Natural killer cell (primary cell): ENCODE measurements at regions of chr16 and their contacts with region 1.

Region 1: GRCh38 chr16:75464130-75464918 is at the start of gene TMEM170A:
- DNase-seq: peak; percentile 98 to 99
- ATAC-seq: peak; percentile 89 to 97 (median 91)
- H3K4me3 ChIP-seq: peak within 1 kb of the TSS; percentile 82
- H3K4me3 Mint-ChIP-seq: peak within 1 kb of the TSS; percentile 97
- H3K27ac ChIP-seq: peak within 1 kb of the TSS; percentile 99
- H3K27ac Mint-ChIP-seq: peak within 1 kb of the TSS; percentile 95 to 97
- H3K4me1 ChIP-seq: peaks cover 13% of the 10 kb centered on the region
- H3K4me1 Mint-ChIP-seq: peaks cover 46 to 52% of the 10 kb centered on the region in 2 donors
- H3K27me3 ChIP-seq: no peaks in the 10 kb centered on the region
- H3K27me3 Mint-ChIP-seq: no peaks in the 10 kb centered on the region
- CTCF ChIP-seq: no peak
- total RNA-seq, gene TMEM170A: 51.5 to 61.0 (median 53.9) TPM

Region 2: DNA sequence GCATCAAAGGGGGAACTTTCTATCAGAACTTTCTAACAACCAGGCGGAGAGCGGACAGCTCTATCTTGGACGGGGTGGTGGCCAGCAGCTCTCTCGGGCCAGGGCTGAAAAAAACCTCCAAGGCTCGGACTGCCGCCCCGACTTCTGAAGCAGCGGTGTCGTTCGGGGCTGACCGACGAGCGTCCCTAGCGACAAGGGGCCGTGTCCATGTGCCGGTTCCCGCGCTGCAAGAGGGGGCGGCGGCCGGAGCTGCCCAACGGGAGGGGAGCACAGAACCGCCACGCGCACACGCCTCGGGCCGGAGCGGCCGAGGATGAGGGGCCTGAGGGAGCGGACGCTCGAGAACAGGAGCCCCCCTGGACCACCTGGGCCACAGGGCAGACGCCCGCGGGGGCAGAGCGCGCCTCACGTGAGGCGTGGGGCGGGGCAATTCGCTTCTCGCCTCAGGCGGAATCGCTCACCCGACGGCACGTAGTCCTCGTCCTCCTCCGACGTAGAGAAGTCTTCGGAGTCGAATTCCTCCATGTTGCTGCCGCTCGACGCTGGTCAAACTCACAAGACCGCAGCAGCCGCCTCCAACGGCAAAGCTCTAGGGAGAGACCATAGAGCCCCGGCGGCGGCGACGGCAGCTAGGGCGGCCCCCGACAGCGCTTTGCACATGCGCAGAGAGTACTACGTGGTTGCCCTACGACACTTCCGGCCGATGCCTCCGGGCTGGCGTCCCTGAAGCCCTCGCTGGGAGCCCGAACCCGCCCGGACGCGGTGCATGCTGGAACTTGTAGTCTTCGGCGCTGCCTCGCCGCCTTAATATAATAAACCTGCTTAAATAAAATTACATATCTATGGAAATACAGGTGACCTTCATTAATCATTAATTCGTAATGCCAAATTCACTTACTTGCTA is 31.2 kb before region 1 on chr16 and contains the start of gene CFDP1:
- intact Hi-C with region 1: loop called (anchors 1 kb)
- DNase-seq: peak; percentile 93 to 98
- ATAC-seq: peak; percentile 83 to 93 (median 87)
- H3K4me3 ChIP-seq: peak within 1 kb of the TSS; percentile 86
- H3K4me3 Mint-ChIP-seq: peak within 1 kb of the TSS; percentile 96
- H3K27ac ChIP-seq: peak within 1 kb of the TSS; percentile 94
- H3K27ac Mint-ChIP-seq: peak within 1 kb of the TSS; percentile 96 to 99
- H3K4me1 ChIP-seq: peaks cover 19% of the 10 kb centered on the region
- H3K4me1 Mint-ChIP-seq: peaks cover 22 to 26% of the 10 kb centered on the region in 2 donors
- H3K27me3 ChIP-seq: no peaks in the 10 kb centered on the region
- H3K27me3 Mint-ChIP-seq: no peaks in the 10 kb centered on the region
- CTCF ChIP-seq: no peak
- total RNA-seq, gene CFDP1: 32.2 to 38.8 (median 32.3) TPM

Region 3: DNA sequence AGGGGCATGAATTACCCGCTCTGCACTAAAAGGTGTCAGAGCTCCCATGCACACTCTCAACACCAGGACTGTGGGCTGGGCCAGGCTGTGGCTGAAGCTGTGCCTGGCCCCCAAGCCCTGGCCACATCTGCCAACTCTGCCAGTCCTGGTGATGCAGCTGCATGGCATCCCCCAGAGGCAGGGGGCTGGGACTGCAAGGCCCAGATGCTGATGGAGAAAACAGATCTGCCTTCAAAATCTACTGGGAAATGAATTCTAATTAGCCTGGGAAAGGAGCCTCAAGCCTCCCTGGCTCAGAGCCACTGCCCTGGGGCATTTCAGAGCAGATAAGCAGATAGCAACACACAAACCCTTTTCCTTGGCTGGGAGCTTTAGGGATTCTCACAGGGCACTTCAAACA is 27.6 kb after region 1 on chr16:
- intact Hi-C with region 1: no loop called
- DNase-seq: no peak
- ATAC-seq: peak in 1 of 3 donors; percentile 43
- H3K4me3 ChIP-seq: no peak overlapping the region
- H3K4me3 Mint-ChIP-seq: no peak overlapping the region
- H3K27ac ChIP-seq: no peak overlapping the region
- H3K27ac Mint-ChIP-seq: no peak overlapping the region
- H3K4me1 ChIP-seq: peaks cover 7% of the 10 kb centered on the region
- H3K4me1 Mint-ChIP-seq: peaks cover 8% of the 10 kb centered on the region in 2 donors
- H3K27me3 ChIP-seq: peaks cover 11% of the 10 kb centered on the region
- H3K27me3 Mint-ChIP-seq: peaks cover 14 to 17% of the 10 kb centered on the region in 2 donors
- CTCF ChIP-seq: no peak

Region 4: GRCh38 chr16:75566040-75566810 is 101.9 kb after region 1 on chr16 and contains the start of gene GABARAPL2:
- intact Hi-C with region 1: loop called (anchors 2 kb)
- DNase-seq: peak; percentile 94 to 95
- ATAC-seq: peak; percentile 78 to 93 (median 85)
- H3K4me3 ChIP-seq: peak within 1 kb of the TSS; percentile 59
- H3K4me3 Mint-ChIP-seq: peak within 1 kb of the TSS; percentile 90
- H3K27ac ChIP-seq: peak within 1 kb of the TSS; percentile 76
- H3K27ac Mint-ChIP-seq: peak within 1 kb of the TSS; percentile 86 to 93
- H3K4me1 ChIP-seq: peaks cover 30% of the 10 kb centered on the region
- H3K4me1 Mint-ChIP-seq: peaks cover 20 to 26% of the 10 kb centered on the region in 2 donors
- H3K27me3 ChIP-seq: peaks cover 2% of the 10 kb centered on the region
- H3K27me3 Mint-ChIP-seq: peaks cover 16 to 19% of the 10 kb centered on the region in 2 donors
- CTCF ChIP-seq: no peak
- total RNA-seq, gene GABARAPL2: 66.2 to 74.0 (median 71.3) TPM